Posterior vena cava (tissue), 2 donors: ENCODE measurements at regions of chr3 and their contacts with region 1.

Region 1: GRCh38 chr3:48465531-48466378 is 19.2 kb downstream of the ATRIP start:
- DNase-seq: peak; percentile 98

Region 2: DNA sequence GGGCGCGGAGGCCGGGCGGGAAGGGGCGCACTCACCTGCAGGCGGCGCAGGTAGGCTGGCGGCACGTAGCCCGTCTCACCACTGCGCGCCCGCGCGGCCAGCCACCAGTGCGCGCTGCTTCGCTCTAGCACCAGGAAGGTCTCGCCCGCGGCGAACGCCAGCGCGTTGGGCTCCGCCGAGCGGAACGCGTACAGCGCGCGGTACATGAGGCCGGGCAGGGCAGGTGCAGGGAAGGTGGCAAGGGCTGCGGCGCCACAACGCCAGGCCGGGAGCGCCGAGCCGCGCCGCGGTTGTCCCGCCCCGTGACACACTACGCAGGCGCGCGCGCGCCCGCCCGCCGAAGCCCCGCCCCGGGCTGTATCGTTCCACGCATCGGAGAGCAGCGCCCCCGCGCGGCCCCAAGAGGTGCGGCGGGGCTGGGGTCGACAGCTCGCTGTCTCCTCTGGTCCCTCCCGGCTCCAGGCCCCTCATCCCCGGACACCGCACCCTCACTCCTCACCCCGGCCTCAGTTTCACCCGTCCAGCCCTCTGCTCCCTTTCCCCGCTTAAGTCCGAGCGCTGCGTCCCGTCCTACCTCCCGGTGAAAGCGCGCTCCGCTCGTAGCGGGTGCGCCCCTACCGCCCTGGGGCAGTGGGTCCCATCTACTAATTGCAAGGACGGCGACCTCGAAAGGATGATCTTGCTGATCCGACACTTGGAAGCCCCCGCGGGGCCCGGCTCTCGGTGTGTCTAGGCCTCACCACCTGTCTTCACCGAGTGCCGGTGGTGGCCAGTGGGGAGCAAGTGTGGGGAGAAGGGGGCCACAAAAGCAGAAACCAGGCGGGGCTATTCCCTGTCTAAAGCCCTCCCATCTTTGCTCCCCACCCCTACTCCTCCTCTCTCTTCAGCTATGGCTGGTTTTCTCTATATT is 220.1 kb after region 1 on chr3 and contains the start of gene NCKIPSD:
- intact Hi-C with region 1: loop called in 1 of 2 experiments (anchors 10 kb)
- DNase-seq: peak; percentile 97
- total RNA-seq, gene NCKIPSD: 14.0 to 19.8 TPM